ENCODE measurements at regions of chr22 and their contacts with region 1.

Region 1: DNA sequence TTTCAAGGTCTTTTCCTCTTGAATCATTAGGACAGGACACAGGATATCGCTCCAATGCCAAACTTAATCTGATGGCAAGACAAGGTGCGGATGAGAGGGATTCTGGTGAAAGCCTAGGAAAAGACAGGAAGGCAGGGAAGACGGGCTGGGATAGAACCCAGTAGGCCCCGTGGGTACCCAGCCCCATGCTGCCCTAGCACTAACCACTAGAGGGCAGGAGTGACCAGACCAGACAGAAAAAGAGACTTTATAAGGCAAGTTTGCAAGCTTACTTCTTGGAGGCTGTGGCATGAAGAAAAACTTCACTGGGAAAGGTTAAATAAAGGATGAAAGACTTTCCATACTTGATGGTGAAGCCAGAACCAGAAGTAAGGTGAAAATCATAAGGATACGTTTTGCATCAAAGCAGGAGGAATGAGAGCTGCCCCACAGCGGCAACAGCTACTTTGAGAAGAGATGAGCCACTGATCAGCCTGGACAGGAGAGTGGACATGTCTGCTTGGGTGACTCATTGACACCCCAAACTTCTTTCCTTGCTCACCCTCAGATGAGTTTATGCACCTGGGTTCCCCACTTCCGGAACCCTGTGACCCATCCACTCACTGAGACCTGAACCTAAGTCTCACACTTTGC is 39.8 kb downstream of the SYN3 start:
- DNase-seq: peak; percentile 33 to 60
- ATAC-seq: no peak
- H3K4me3 ChIP-seq: no peak overlapping the region
- H3K27ac ChIP-seq: no peak overlapping the region
- H3K4me1 ChIP-seq: no peaks in the 10 kb centered on the region
- H3K27me3 ChIP-seq: no peaks in the 10 kb centered on the region
- CTCF ChIP-seq: peak; percentile 65

Region 2: GRCh38 chr22:32971276-32971675 is 47.1 kb before region 1 on chr22:
- intact Hi-C with region 1: no loop called
- DNase-seq: no peak
- ATAC-seq: no peak
- H3K4me3 ChIP-seq: no peak overlapping the region
- H3K27ac ChIP-seq: no peak overlapping the region
- H3K4me1 ChIP-seq: no peaks in the 10 kb centered on the region
- H3K27me3 ChIP-seq: peaks cover 0 to 3% (median 0%) of the 10 kb centered on the region in 3 donors
- CTCF ChIP-seq: no peak

Region 3: GRCh38 chr22:33202455-33202854 is 184.1 kb after region 1 on chr22:
- intact Hi-C with region 1: loop called in 1 of 2 experiments (anchors 5 kb)
- DNase-seq: no peak
- ATAC-seq: no peak
- H3K4me3 ChIP-seq: no peak overlapping the region
- H3K27ac ChIP-seq: no peak overlapping the region
- H3K4me1 ChIP-seq: no peaks in the 10 kb centered on the region
- H3K27me3 ChIP-seq: peaks cover 0 to 4% (median 0%) of the 10 kb centered on the region in 3 donors
- CTCF ChIP-seq: no peak

Measured in psoas muscle (tissue), 8 donors.